Mammary epithelial cell (primary cell): ENCODE measurements at regions of chr3 and their contacts with region 1.

Region 1: GRCh38 chr3:193680220-193680619 is 87.2 kb downstream of the OPA1 start:
- DNase-seq: no peak
- H3K4me3 ChIP-seq: no peak overlapping the region
- H3K27ac ChIP-seq: no peak overlapping the region
- H3K4me1 ChIP-seq: no peaks in the 10 kb centered on the region
- H3K27me3 ChIP-seq: no peaks in the 10 kb centered on the region
- CTCF ChIP-seq: no peak

Region 2: DNA sequence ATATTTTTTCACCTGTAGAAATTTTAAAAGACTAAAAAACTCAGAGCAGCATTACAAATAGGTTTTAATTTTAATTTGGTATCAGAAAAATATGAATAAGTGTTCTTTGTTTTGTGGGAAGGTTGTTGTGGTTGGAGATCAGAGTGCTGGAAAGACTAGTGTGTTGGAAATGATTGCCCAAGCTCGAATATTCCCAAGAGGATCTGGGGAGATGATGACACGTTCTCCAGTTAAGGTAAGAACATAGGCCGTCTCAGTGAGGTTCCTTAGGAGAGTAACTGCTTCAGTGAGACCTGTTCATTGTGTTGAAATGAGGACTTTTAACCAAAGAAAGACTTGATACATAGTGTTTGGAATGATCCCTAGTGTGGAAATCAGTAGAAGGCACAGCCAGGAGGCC is 42.4 kb before region 1 on chr3:
- CTCF ChIA-PET with region 1: no interaction called
- dilution Hi-C with region 1: loop called (anchors 5 kb)
- in situ Hi-C with region 1: no loop called
- intact Hi-C with region 1: no loop called
- DNase-seq: peak; percentile 4
- H3K4me3 ChIP-seq: no peak overlapping the region
- H3K27ac ChIP-seq: no peak overlapping the region
- H3K4me1 ChIP-seq: no peaks in the 10 kb centered on the region
- H3K27me3 ChIP-seq: no peaks in the 10 kb centered on the region
- CTCF ChIP-seq: no peak

Region 3: DNA sequence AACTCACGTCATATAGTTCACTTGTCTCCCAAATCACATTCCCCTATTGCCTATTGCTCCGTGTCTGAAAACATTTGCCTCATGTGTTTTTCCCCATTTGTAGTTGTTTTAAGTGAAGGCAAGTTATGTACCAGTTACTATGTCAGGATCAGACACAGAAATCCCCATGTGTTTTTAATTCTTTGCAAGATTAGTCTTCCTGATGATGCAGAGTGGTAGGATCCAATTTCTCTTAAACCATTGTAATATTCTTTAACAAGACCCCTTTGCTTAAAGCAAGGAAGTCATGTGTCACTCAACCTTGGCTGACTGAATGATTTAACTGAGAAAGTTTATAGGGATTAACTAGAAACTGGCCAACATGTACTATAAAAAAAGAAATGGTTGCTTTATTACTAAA is 77.2 kb after region 1 on chr3:
- CTCF ChIA-PET with region 1: no interaction called
- dilution Hi-C with region 1: loop called (anchors 5 kb)
- in situ Hi-C with region 1: no loop called
- intact Hi-C with region 1: no loop called
- DNase-seq: no peak
- H3K4me3 ChIP-seq: no peak overlapping the region
- H3K27ac ChIP-seq: no peak overlapping the region
- H3K4me1 ChIP-seq: no peaks in the 10 kb centered on the region
- H3K27me3 ChIP-seq: peaks cover 2% of the 10 kb centered on the region
- CTCF ChIP-seq: no peak

Region 4: GRCh38 chr3:193768070-193768394 is 87.8 kb after region 1 on chr3:
- CTCF ChIA-PET with region 1: no interaction called
- dilution Hi-C with region 1: no loop called
- in situ Hi-C with region 1: no loop called
- intact Hi-C with region 1: no loop called
- DNase-seq: peak; percentile 52
- H3K4me3 ChIP-seq: no peak overlapping the region
- H3K27ac ChIP-seq: no peak overlapping the region
- H3K4me1 ChIP-seq: no peaks in the 10 kb centered on the region
- H3K27me3 ChIP-seq: no peaks in the 10 kb centered on the region
- CTCF ChIP-seq: no peak